ENCODE measurements at regions of chr7 and their contacts with region 1.

Region 1: DNA sequence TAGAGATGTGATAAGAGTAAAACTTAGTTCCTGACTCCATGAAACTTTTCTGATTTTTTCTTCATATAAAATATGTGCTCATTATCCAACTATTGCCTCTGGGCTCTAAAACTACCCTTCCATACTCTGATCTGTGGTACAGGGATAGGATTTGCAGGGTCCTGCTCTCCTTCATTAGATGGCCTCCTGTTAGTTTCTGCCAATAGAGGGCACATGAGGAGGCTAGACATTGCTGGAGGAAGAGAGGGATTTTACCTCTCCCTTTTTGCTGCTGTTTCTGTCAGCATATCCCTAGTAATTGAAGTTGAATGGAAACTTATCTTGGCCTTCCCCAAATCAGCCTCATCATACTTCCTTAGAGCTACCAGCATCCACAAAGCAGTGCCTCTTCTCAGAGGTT is 269.4 kb downstream of the NXPH1 start:
- DNase-seq: no peak
- ATAC-seq: no peak
- H3K4me3 ChIP-seq: no peak overlapping the region
- H3K27ac ChIP-seq: no peak overlapping the region
- H3K4me1 ChIP-seq: no peaks in the 10 kb centered on the region
- H3K27me3 ChIP-seq: no peaks in the 10 kb centered on the region
- CTCF ChIP-seq: no peak
- POLR2A ChIP-seq: no peak

Region 2: GRCh38 chr7:8908893-8909292 is 206.1 kb after region 1 on chr7:
- intact Hi-C with region 1: loop called in 1 of 10 experiments (anchors 5 kb)
- DNase-seq: no peak
- ATAC-seq: no peak
- H3K4me3 ChIP-seq: no peak overlapping the region
- H3K27ac ChIP-seq: no peak overlapping the region
- H3K4me1 ChIP-seq: no peaks in the 10 kb centered on the region
- H3K27me3 ChIP-seq: peaks cover 0 to 3% (median 0%) of the 10 kb centered on the region in 9 donors
- CTCF ChIP-seq: no peak
- POLR2A ChIP-seq: no peak

Measured in heart left ventricle (tissue), 16 donors.